ENCODE measurements at regions of chrX and their contacts with region 1.

Region 1: DNA sequence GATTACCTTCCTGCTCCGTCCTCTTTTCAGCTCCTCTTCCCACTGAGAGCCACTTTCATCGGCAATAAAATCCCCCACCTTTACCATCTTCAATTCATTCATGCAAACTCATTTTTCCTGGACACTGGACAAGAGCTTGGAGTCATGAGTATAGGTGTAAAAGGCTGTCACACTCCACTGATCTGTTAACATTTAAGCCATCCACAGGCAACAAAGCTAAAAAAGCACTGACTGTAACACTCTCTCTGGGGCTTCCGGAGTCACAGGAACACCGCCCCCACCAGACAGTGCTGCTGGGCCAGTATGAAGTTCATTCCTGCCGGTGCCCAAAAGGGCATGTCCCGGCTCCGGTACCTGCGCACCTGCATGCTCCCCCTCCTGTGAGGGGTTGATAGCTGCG is 38.5 kb downstream of the MAGEB5 start:
- DNase-seq: no peak
- ATAC-seq: no peak
- H3K4me3 Mint-ChIP-seq: no peak overlapping the region
- H3K27ac Mint-ChIP-seq: no peak overlapping the region
- H3K4me1 Mint-ChIP-seq: no peaks in the 10 kb centered on the region
- H3K27me3 Mint-ChIP-seq: no peaks in the 10 kb centered on the region
- CTCF ChIP-seq: no peak

Region 2: DNA sequence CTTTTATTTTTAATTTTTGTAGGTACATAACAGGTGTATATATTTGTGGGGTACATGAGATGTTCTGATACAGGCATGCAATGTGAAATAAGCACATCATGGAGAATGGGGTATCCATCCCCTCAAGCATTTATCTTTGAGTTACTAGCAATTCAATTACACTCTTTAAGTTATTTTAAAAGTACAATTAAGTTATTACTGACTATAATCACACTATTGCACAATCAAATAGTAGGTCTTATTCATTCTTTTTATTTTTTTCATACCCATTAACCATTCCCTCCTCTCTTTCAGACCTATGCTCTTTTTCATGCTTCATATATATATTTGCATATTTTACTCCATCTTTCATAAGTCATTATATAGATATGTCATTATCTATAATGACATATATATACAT is 54.8 kb after region 1 on chrX:
- CTCF ChIA-PET with region 1: no interaction called
- POLR2A ChIA-PET with region 1: no interaction called
- intact Hi-C with region 1: no loop called
- DNase-seq: no peak
- ATAC-seq: no peak
- H3K4me3 Mint-ChIP-seq: no peak overlapping the region
- H3K27ac Mint-ChIP-seq: no peak overlapping the region
- H3K4me1 Mint-ChIP-seq: no peaks in the 10 kb centered on the region
- H3K27me3 Mint-ChIP-seq: no peaks in the 10 kb centered on the region
- CTCF ChIP-seq: no peak

Region 3: GRCh38 chrX:26328610-26329319 is 74.3 kb after region 1 on chrX:
- CTCF ChIA-PET with region 1: no interaction called
- POLR2A ChIA-PET with region 1: no interaction called
- intact Hi-C with region 1: loop called (anchors 10 kb)
- DNase-seq: no peak
- ATAC-seq: no peak
- H3K4me3 Mint-ChIP-seq: no peak overlapping the region
- H3K27ac Mint-ChIP-seq: no peak overlapping the region
- H3K4me1 Mint-ChIP-seq: no peaks in the 10 kb centered on the region
- H3K27me3 Mint-ChIP-seq: no peaks in the 10 kb centered on the region
- CTCF ChIP-seq: no peak